Panc1 (cell line): ENCODE measurements at regions of chr15 and their contacts with region 1.

Region 1: DNA sequence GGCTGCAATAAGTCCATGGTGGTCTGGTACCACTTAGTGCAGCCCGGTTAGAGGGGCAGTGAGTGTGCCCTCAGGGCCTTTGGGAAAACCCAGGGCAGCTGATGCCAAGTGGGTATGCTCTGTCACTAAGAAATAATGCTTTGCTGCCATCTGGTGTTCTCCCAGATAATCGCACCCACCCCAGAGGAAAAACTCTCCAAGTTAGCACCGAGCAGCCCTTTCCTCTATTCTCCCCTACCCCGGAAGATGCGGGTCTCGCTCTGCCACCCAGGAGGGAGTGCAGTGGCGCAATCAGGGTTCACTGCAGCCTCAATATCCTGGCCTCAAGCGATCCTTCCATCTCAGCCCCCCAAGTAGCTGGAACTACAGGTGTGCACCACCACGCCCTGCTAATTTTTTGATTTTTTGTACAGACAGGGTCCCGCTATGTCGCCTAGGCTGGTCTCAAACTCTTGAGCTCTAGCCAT is 21.3 kb upstream of the DAPK2 start:
- DNase-seq: no peak
- ATAC-seq: peak; percentile 93
- H3K4me3 ChIP-seq: no peak overlapping the region
- H3K27ac ChIP-seq: no peak overlapping the region
- H3K4me1 ChIP-seq: peaks cover 19% of the 10 kb centered on the region
- H3K27me3 ChIP-seq: no peaks in the 10 kb centered on the region
- CTCF ChIP-seq: peak; percentile 86

Region 2: GRCh38 chr15:63610200-63610841 is 457.3 kb before region 1 on chr15:
- CTCF ChIA-PET with region 1: interaction called, 11 read pairs
- POLR2A ChIA-PET with region 1: no interaction called
- in situ Hi-C with region 1: no loop called
- intact Hi-C with region 1: loop called (anchors 5 kb)
- DNase-seq: peak; percentile 64
- ATAC-seq: peak; percentile 95
- H3K4me3 ChIP-seq: no peak overlapping the region
- H3K27ac ChIP-seq: peak overlapping the region; percentile 25; the same call in 1 of the 2 replicates
- H3K4me1 ChIP-seq: peaks cover 7% of the 10 kb centered on the region
- H3K27me3 ChIP-seq: no peaks in the 10 kb centered on the region
- CTCF ChIP-seq: peak; percentile 90

Region 3: DNA sequence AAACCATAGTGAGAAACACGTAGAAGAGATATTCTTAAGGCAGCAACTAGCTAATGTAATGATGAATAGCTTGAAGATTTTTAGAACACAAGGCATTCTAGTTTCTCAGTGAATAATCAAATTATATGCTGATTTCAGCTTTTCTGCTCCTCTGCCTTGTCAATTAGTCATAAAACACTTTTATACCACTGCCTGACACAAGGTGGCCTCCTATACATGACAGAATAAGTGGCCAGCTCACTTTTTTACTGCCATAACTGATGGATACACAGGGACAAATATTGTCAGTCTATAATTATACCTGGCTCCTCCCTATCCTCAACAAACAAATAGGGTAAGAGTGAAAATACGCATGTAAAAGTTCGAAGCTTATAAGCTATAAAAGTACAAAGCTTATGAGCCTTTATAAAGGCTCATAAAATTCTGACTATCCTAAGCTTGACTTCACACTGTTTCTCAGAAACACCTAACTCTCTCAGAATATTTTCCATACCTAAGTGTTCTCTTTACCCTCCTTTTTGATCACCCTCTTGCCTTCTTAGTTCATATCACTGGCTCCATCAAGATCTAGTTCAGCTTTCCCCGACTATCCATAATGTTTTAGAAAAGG is 315.4 kb before region 1 on chr15:
- CTCF ChIA-PET with region 1: interaction called, 17 read pairs
- POLR2A ChIA-PET with region 1: no interaction called
- in situ Hi-C with region 1: no loop called
- intact Hi-C with region 1: loop called (anchors 1 kb)
- DNase-seq: peak; percentile 51
- ATAC-seq: peak; percentile 84
- H3K4me3 ChIP-seq: no peak overlapping the region
- H3K27ac ChIP-seq: no peak overlapping the region
- H3K4me1 ChIP-seq: no peaks in the 10 kb centered on the region
- H3K27me3 ChIP-seq: no peaks in the 10 kb centered on the region
- CTCF ChIP-seq: peak; percentile 75; the same call in 1 of the 2 replicates

Region 4: DNA sequence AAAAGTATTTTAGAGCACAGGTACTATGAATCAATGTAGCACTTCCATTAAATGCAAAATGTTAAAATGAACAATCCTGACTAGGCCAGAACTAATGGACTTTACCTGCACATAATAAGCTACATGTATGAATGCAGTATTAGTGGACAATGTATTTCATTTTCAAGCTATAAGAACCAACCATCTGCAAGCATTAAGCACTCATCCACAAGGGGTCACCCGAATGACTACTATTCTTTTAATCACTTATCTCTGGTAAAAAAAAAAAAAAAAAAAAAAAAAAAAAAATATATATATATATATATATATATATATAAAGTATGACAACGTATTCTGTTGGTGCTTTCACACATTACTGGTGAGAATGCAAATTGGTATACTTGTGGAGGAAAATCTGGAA is 241.1 kb before region 1 on chr15:
- CTCF ChIA-PET with region 1: no interaction called
- POLR2A ChIA-PET with region 1: no interaction called
- in situ Hi-C with region 1: no loop called
- intact Hi-C with region 1: loop called (anchors 5 kb)
- DNase-seq: no peak
- ATAC-seq: no peak
- H3K4me3 ChIP-seq: no peak overlapping the region
- H3K27ac ChIP-seq: no peak overlapping the region
- H3K4me1 ChIP-seq: no peaks in the 10 kb centered on the region
- H3K27me3 ChIP-seq: no peaks in the 10 kb centered on the region
- CTCF ChIP-seq: no peak; the same call in 1 of the 2 replicates

Region 5: DNA sequence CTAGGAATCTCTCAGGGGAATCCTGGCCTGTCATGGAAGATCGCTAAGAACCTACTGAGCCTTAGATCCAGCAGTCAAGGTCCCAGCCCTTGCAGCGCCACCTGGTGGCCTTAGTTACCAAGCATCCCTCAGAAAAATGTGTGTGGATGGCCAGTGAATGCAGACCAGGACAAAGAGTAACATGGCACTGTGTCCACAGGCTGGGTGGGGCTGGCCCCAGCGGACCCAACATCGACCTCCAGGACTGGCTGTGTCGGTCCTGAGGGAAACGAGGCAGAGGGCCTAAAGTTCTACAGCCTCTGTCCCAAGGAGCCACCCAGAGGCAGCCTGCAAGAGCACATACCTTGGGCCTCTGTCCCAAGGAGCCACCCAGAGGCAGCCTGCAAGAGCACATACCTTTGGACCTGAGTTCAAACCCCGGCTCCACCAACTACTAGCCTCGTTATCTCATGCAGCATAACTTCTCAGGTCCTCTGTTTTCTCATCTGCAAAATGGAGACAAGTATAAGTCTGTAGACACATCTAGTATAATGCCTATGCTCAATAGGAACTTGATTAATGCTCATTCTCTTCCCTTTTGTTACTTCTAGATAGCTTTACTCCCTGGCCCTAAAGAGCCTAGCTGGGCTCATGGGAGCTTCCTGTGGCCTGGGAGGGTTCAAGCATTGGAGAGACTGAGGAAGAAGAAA is 176.4 kb before region 1 on chr15:
- CTCF ChIA-PET with region 1: no interaction called
- POLR2A ChIA-PET with region 1: no interaction called
- in situ Hi-C with region 1: no loop called
- intact Hi-C with region 1: loop called (anchors 5 kb)
- DNase-seq: peak; percentile 74
- ATAC-seq: peak; percentile 98
- H3K4me3 ChIP-seq: no peak overlapping the region
- H3K27ac ChIP-seq: no peak overlapping the region; the same call in 1 of the 2 replicates
- H3K4me1 ChIP-seq: peaks cover 3% of the 10 kb centered on the region; the same call in 1 of the 2 replicates
- H3K27me3 ChIP-seq: no peaks in the 10 kb centered on the region
- CTCF ChIP-seq: peak; percentile 95

Region 6: GRCh38 chr15:63933522-63933921 is 134.1 kb before region 1 on chr15:
- CTCF ChIA-PET with region 1: interaction called, 12 read pairs
- POLR2A ChIA-PET with region 1: no interaction called
- in situ Hi-C with region 1: no loop called
- intact Hi-C with region 1: no loop called
- DNase-seq: peak; percentile 35
- ATAC-seq: peak; percentile 90
- H3K4me3 ChIP-seq: no peak overlapping the region
- H3K27ac ChIP-seq: no peak overlapping the region
- H3K4me1 ChIP-seq: no peaks in the 10 kb centered on the region
- H3K27me3 ChIP-seq: no peaks in the 10 kb centered on the region
- CTCF ChIP-seq: no peak